SK-N-SH (cell line): ENCODE measurements at regions of chr17 and their contacts with region 1.

Region 1: DNA sequence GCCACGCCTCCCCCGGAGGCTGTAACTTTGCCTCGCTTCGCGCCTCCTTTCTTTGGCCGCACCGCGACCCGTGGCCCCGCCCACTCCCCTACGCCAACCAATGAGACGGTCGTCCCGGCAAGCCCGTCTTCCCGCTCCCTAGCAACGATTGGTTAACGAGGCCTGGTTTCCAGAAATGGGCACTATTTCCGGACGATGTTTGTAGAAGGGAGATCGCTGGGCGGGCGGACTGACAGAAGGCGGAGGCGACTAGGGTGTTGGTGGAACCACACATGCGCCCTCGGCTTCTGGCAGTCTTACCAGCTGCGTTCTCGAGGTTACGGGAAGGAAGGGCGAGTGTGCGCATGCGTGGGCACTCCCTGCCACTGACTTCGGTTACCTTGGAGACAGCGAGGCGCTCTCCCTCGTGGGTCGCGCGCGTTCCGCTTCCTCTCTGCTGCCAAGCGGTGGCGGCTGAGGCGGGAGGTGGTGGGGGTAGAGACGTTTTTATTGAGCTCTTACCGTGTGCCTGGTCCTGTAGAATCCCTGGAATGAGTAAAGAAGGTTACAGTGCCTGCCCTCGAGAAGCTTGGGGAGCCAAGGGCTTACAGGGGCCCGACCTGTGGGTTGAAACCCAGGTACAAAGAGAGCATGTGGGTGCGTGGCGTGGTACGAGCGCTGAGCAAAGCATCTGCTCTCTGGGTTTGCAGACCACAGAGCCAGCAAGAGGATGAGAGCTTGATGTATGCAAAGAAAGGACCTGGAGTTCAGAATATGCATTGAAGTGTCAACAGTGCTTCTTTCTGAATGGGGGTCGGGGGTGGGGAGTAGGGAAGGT is 500 bp upstream of the MAP3K14 start:
- DNase-seq: peak; percentile 99
- H3K4me3 ChIP-seq: peak overlapping the region; percentile 87 to 93
- H3K27ac ChIP-seq: peak overlapping the region; percentile 95 to 99
- H3K4me1 ChIP-seq: peaks cover 47 to 58% of the 10 kb centered on the region in 2 experiments
- H3K27me3 ChIP-seq: no peaks in the 10 kb centered on the region
- CTCF ChIP-seq: no peak
- EP300 ChIP-seq: no peak
- RAD21 ChIP-seq: 0 out of 2 replicates have a peak, but pooled peaks have one; percentile 15

Region 2: GRCh38 chr17:44862278-44862914 is 454.9 kb before region 1 on chr17:
- CTCF ChIA-PET with region 1: no interaction called
- POLR2A ChIA-PET with region 1: no interaction called
- DNase-seq: no peak
- H3K4me3 ChIP-seq: no peak overlapping the region
- H3K27ac ChIP-seq: no peak overlapping the region
- H3K4me1 ChIP-seq: no peaks in the 10 kb centered on the region
- H3K27me3 ChIP-seq: 0 out of 2 replicates have a peak, but pooled peaks cover 3% of the 10 kb centered on the region
- CTCF ChIP-seq: no peak
- EP300 ChIP-seq: no peak
- RAD21 ChIP-seq: no peak

Region 3: GRCh38 chr17:45143104-45143670 is 174.1 kb before region 1 on chr17:
- CTCF ChIA-PET with region 1: no interaction called
- POLR2A ChIA-PET with region 1: no interaction called
- DNase-seq: no peak
- H3K4me3 ChIP-seq: no peak overlapping the region
- H3K27ac ChIP-seq: no peak overlapping the region
- H3K4me1 ChIP-seq: peaks cover 8 to 11% of the 10 kb centered on the region in 2 experiments; a peak in 2 of 4 replicates
- H3K27me3 ChIP-seq: no peaks in the 10 kb centered on the region
- CTCF ChIP-seq: no peak
- EP300 ChIP-seq: no peak
- RAD21 ChIP-seq: no peak

Region 4: GRCh38 chr17:45277216-45277849 is 40.0 kb before region 1 on chr17:
- CTCF ChIA-PET with region 1: interaction called, 41 read pairs
- POLR2A ChIA-PET with region 1: interaction called, 4 read pairs
- DNase-seq: peak; percentile 67
- H3K4me3 ChIP-seq: no peak overlapping the region; a peak in 1 of 4 replicates
- H3K27ac ChIP-seq: peak overlapping the region in 1 of 2 experiments; percentile 63; a peak in 2 of 4 replicates
- H3K4me1 ChIP-seq: peaks cover 6% of the 10 kb centered on the region in 2 experiments; a peak in 2 of 4 replicates
- H3K27me3 ChIP-seq: no peaks in the 10 kb centered on the region
- CTCF ChIP-seq: peak; percentile 71
- EP300 ChIP-seq: no peak
- RAD21 ChIP-seq: peak; percentile 78

Region 5: DNA sequence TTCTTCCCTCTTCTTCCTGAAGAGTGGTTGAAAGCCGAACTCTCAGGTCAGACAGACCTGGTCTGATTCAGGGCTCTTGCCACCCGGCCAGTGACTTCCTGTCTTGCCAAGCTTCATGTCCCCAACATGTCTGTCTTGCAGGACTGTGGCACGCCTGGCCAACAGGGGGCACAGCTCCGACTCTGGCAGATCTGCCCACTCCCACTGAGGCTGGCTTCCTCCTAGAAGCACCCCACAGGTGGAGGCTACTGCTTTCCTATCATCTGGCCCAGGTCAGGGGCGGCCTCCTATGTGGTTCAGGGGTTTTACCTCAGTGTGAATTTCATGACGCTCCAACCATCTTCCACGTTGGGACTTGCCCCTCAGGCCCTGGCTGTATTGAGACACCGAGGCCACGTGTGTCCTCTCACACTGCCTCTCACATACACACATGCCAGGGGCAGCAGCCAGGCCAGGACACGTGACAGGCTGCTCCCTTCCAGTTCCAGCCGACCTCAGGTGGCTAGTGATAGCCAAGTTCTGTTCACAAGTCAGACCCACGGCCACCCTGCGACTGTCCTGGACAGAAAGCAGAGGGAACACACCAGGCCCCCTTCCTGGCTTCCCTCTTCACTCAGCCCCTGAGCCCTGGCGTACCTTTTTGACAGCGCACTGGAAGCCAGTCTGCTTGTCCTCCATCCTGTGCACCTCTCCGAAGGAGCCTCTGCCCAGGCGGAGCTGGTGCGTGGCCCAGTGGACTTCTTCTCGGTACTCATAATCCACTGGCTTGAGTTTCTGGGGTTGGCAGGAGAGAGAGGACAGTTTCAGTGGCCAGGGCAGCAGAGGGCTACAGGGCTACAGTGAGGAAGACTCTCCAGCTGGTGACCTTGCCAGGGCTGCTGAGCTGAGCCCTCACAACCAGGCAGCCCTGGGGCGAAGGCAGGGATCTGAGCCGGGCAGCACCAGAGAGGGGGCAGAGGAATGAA is 32.9 kb before region 1 on chr17:
- CTCF ChIA-PET with region 1: interaction called, 41 read pairs
- POLR2A ChIA-PET with region 1: interaction called, 13 read pairs
- DNase-seq: no peak
- H3K4me3 ChIP-seq: no peak overlapping the region
- H3K27ac ChIP-seq: no peak overlapping the region; a peak in 1 of 4 replicates
- H3K4me1 ChIP-seq: peaks cover 0 to 36% of the 10 kb centered on the region in 2 experiments; a peak in 2 of 4 replicates
- H3K27me3 ChIP-seq: no peaks in the 10 kb centered on the region
- CTCF ChIP-seq: peak; percentile 42
- EP300 ChIP-seq: no peak
- RAD21 ChIP-seq: peak; percentile 24; the same call in 1 of the 2 replicates

Region 6: DNA sequence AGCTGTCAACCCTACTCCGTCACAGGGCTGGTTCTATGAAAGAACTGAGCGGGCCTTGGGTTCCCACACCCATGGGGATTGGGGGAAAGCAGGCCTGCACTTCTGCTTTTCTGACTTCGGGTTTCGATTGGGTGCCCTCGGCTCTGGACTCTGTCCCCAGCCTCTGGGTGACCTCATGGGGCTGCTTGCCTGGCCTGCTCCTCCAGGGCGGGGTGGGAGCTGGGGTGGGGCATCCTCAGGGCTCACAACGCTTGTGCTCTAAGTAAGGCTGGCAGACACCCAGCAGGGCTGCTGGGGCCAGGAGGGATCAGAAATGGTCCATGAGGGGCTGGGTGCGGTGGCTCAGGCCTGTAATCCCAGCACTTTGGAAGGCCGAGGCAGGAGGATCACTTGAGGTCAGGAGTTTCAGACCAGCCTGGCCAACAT is 96.2 kb after region 1 on chr17:
- CTCF ChIA-PET with region 1: no interaction called
- POLR2A ChIA-PET with region 1: no interaction called
- DNase-seq: no peak
- H3K4me3 ChIP-seq: no peak overlapping the region
- H3K27ac ChIP-seq: no peak overlapping the region
- H3K4me1 ChIP-seq: peaks cover 0 to 20% of the 10 kb centered on the region in 2 experiments; a peak in 1 of 4 replicates
- H3K27me3 ChIP-seq: no peaks in the 10 kb centered on the region
- CTCF ChIP-seq: no peak
- EP300 ChIP-seq: no peak
- RAD21 ChIP-seq: no peak